ENCODE measurements at regions of chr12 and their contacts with region 1.

Region 1: DNA sequence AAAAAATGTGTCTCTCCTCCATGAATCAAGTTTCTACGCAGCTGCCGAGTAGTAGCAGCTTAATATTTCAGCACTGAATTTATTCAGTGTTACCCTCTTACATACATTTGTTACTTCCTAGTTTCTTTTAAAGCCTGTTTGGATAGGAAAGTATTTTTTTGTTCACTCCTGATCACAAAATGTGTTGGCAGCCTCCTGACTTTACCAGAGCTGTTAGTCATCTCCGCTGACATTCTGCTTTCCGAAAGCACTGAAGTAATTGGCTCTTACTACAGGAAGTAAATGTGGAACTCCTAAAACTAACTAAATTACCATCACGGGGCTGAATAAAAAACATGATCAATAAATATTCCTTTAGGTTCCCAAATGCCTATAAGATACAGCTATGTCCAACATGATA is 225.5 kb downstream of the EPS8 start:
- DNase-seq: peak; percentile 53
- ATAC-seq: peak; percentile 79
- H3K4me3 Mint-ChIP-seq: peak overlapping the region; percentile 55
- H3K27ac Mint-ChIP-seq: peak overlapping the region; percentile 94
- H3K4me1 Mint-ChIP-seq: peaks cover 67% of the 10 kb centered on the region
- H3K27me3 Mint-ChIP-seq: no peaks in the 10 kb centered on the region

Region 2: GRCh38 chr12:14774906-14775762 is 788.5 kb before region 1 on chr12:
- CTCF ChIA-PET with region 1: no interaction called
- POLR2A ChIA-PET with region 1: no interaction called
- intact Hi-C with region 1: loop called in 1 of 2 experiments (anchors 2 kb)
- DNase-seq: peak; percentile 47
- ATAC-seq: no peak
- H3K4me3 Mint-ChIP-seq: peak overlapping the region; percentile 96
- H3K27ac Mint-ChIP-seq: peak overlapping the region; percentile 97
- H3K4me1 Mint-ChIP-seq: peaks cover 35% of the 10 kb centered on the region
- H3K27me3 Mint-ChIP-seq: no peaks in the 10 kb centered on the region

Region 3: GRCh38 chr12:14960548-14961465 is 602.9 kb before region 1 on chr12:
- CTCF ChIA-PET with region 1: no interaction called
- POLR2A ChIA-PET with region 1: no interaction called
- intact Hi-C with region 1: loop called in 1 of 2 experiments (anchors 5 kb)
- DNase-seq: peak; percentile 56
- ATAC-seq: peak; percentile 53
- H3K4me3 Mint-ChIP-seq: peak overlapping the region; percentile 96
- H3K27ac Mint-ChIP-seq: peak overlapping the region; percentile 99
- H3K4me1 Mint-ChIP-seq: peaks cover 55% of the 10 kb centered on the region
- H3K27me3 Mint-ChIP-seq: no peaks in the 10 kb centered on the region

Region 4: DNA sequence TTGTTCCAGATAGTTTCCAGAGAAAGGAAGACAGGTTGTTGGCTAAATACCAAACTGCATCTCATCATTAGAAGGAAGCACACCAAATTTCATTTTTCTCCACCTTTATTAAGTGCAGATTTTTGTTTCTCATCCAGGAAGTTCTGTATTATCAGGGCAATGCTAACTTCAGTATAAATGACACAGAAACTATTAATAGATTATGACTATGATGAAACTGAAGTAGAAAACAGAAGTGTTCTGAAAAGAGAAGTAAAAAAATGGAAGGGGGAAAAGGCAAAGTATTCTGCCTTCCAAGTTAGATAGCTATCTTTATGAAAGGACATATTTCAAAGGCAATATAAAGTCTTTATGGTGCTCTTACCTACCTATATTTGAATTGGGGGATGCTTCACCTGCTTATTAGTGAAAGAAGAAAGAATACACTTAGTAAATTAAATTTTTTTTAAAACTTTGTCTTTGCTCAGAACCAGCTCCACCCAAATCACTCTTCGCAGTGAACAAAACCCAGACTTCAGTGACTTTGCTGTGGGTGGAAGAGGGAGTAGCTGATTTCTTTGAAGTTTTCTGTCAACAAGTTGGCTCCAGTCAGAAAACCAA is 17.5 kb before region 1 on chr12:
- CTCF ChIA-PET with region 1: interaction called, 83 read pairs
- POLR2A ChIA-PET with region 1: interaction called, 4 read pairs
- intact Hi-C with region 1: loop called (anchors 1 to 2 kb)
- DNase-seq: peak; percentile 32
- ATAC-seq: peak; percentile 78
- H3K4me3 Mint-ChIP-seq: no peak overlapping the region
- H3K27ac Mint-ChIP-seq: peak overlapping the region; percentile 78
- H3K4me1 Mint-ChIP-seq: peaks cover 62% of the 10 kb centered on the region
- H3K27me3 Mint-ChIP-seq: no peaks in the 10 kb centered on the region

Measured in activated CD4-positive, alpha-beta T cell treated with anti-CD3 and anti-CD28 coated beads for 36 hours (primary cell).